Mammary epithelial cell (primary cell): ENCODE measurements at regions of chr5 and their contacts with region 1.

Region 1: DNA sequence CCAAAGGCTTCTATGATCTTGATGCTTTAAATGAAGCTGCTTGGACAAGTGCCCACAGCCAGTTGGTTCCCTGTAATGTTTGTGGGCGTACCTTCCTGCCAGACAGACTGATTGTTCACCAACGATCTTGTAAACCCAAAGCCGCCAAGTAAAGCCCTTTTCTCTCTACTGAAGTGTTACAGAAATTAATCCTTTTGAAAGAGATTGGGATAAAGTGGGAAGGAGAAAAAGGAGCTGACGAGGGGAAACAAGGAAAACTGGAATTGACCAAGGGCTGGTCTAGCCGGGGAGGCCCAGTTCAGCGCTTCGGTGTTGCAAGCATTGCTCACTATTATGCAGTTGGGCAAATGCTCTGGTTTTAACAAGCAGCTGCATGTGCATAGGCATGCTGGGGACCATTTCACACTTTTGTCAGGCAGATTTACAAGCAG is 53.2 kb downstream of the ZNF474 start:
- DNase-seq: peak; percentile 92
- H3K4me3 ChIP-seq: peak overlapping the region in 2 of 3 experiments; percentile 32 to 34
- H3K27ac ChIP-seq: peak overlapping the region; percentile 99
- H3K4me1 ChIP-seq: peaks cover 42% of the 10 kb centered on the region
- H3K27me3 ChIP-seq: no peaks in the 10 kb centered on the region
- CTCF ChIP-seq: no peak

Region 2: DNA sequence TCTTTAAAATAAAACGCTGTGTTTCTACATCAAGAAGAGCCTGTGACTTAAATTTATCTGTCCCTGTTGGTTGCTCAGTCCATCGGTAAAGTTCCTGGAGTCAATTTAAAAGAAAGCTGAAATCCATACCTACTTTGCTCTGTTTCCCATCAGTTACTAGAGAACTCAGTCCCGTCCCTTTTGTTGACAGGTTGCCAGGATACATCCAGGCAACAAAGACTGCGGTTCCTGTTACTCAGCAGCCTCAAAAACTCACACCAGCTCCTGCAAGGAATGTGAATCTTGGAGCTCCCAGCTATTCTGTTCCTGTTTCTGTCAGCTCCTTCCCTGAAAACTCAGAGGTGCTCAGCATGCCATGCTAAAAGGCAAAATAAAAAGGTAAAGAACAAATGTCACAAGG is 53.2 kb before region 1 on chr5 and contains the start of gene ZNF474:
- CTCF ChIA-PET with region 1: no interaction called
- dilution Hi-C with region 1: no loop called
- in situ Hi-C with region 1: no loop called
- intact Hi-C with region 1: loop called (anchors 2 kb)
- DNase-seq: peak; percentile 97
- H3K4me3 ChIP-seq: peak within 1 kb of the TSS in 1 of 3 experiments; percentile 27
- H3K27ac ChIP-seq: peak within 1 kb of the TSS; percentile 92
- H3K4me1 ChIP-seq: peaks cover 18% of the 10 kb centered on the region
- H3K27me3 ChIP-seq: no peaks in the 10 kb centered on the region
- CTCF ChIP-seq: no peak
- total RNA-seq, gene ZNF474: 0.19 to 0.33 TPM

Region 3: DNA sequence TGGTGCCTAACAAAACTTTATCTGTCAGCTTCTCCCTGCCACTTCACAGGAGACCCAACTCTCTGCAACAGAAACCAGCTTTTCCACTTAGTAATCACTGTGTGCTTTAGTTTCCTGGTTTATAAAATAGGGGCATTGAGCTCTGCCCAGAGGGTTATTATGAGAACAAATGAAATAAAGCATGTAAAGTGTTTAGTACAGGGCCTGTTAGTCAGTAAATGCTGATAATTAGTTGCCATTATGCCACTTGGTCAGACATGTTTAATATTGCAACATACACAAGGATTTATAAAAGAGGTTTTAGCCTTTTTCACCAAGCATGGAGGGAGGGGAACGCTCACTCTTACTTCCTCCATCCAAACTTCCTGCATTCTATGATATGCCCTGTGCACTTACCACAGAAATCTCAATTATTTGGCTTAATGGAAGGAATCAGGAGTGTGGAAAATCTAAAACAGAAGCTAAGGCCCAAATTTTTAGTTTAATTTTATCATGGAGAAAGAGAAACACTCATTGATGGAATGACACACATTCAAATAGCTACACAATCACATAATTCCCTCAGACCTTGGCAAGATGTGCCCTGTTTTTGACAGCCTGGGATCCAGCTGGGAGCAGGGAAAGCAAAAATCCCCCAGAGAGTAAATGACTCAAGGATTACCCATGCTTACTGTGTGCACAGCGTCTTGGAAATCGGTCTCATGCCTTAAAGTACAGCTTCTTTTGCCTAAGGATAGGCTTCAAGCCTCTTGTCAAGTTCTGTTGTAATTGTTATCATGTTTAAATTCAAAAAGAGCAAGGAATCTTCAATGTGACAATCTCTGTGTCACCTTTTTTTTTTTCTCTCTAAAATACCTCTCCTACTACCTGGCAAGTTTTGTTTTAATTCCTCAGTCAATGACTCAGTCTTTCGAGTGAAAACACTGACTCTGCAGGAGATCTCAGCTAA is 19.1 kb before region 1 on chr5:
- CTCF ChIA-PET with region 1: no interaction called
- dilution Hi-C with region 1: no loop called
- in situ Hi-C with region 1: no loop called
- intact Hi-C with region 1: loop called (anchors 2 kb)
- DNase-seq: peak; percentile 95
- H3K4me3 ChIP-seq: peak overlapping the region in 1 of 3 experiments; percentile 4
- H3K27ac ChIP-seq: peak overlapping the region; percentile 91
- H3K4me1 ChIP-seq: peaks cover 21% of the 10 kb centered on the region
- H3K27me3 ChIP-seq: no peaks in the 10 kb centered on the region
- CTCF ChIP-seq: no peak

Region 4: GRCh38 chr5:122192497-122193496 is 10.3 kb after region 1 on chr5:
- CTCF ChIA-PET with region 1: interaction called, 10 read pairs
- dilution Hi-C with region 1: no loop called
- in situ Hi-C with region 1: no loop called
- intact Hi-C with region 1: no loop called
- DNase-seq: peak; percentile 62
- H3K4me3 ChIP-seq: no peak overlapping the region
- H3K27ac ChIP-seq: no peak overlapping the region
- H3K4me1 ChIP-seq: no peaks in the 10 kb centered on the region
- H3K27me3 ChIP-seq: no peaks in the 10 kb centered on the region
- CTCF ChIP-seq: peak; percentile 64 to 65

Region 5: GRCh38 chr5:122751293-122751753 is 568.8 kb after region 1 on chr5:
- CTCF ChIA-PET with region 1: no interaction called
- dilution Hi-C with region 1: no loop called
- in situ Hi-C with region 1: no loop called
- intact Hi-C with region 1: loop called (anchors 5 kb)
- DNase-seq: peak; percentile 96
- H3K4me3 ChIP-seq: no peak overlapping the region
- H3K27ac ChIP-seq: peak overlapping the region; percentile 95
- H3K4me1 ChIP-seq: peaks cover 31% of the 10 kb centered on the region
- H3K27me3 ChIP-seq: no peaks in the 10 kb centered on the region
- CTCF ChIP-seq: no peak